Activated CD4-positive, alpha-beta memory T cell treated with anti-CD3 and anti-CD28 coated beads for 36 hours (primary cell): ENCODE measurements at regions of chr10 and their contacts with region 1.

Region 1: GRCh38 chr10:75019370-75019769 is 92.1 kb upstream of the SAMD8 start:
- DNase-seq: no peak
- H3K4me3 Mint-ChIP-seq: no peak overlapping the region
- H3K27ac Mint-ChIP-seq: no peak overlapping the region
- H3K4me1 Mint-ChIP-seq: peaks cover 18% of the 10 kb centered on the region
- H3K27me3 Mint-ChIP-seq: no peaks in the 10 kb centered on the region

Region 2: GRCh38 chr10:74262856-74263255 is 756.5 kb before region 1 on chr10:
- CTCF ChIA-PET with region 1: interaction called, 6 read pairs
- POLR2A ChIA-PET with region 1: no interaction called
- intact Hi-C with region 1: loop called (anchors 1 kb)
- DNase-seq: no peak
- H3K4me3 Mint-ChIP-seq: no peak overlapping the region
- H3K27ac Mint-ChIP-seq: no peak overlapping the region
- H3K4me1 Mint-ChIP-seq: peaks cover 7% of the 10 kb centered on the region
- H3K27me3 Mint-ChIP-seq: no peaks in the 10 kb centered on the region

Region 3: GRCh38 chr10:74332398-74332797 is 687.0 kb before region 1 on chr10:
- CTCF ChIA-PET with region 1: no interaction called
- POLR2A ChIA-PET with region 1: no interaction called
- intact Hi-C with region 1: no loop called
- DNase-seq: no peak
- H3K4me3 Mint-ChIP-seq: no peak overlapping the region
- H3K27ac Mint-ChIP-seq: no peak overlapping the region
- H3K4me1 Mint-ChIP-seq: no peaks in the 10 kb centered on the region
- H3K27me3 Mint-ChIP-seq: no peaks in the 10 kb centered on the region

Region 4: GRCh38 chr10:74419958-74420375 is 599.4 kb before region 1 on chr10:
- CTCF ChIA-PET with region 1: interaction called, 5 read pairs
- POLR2A ChIA-PET with region 1: no interaction called
- intact Hi-C with region 1: loop called (anchors 5 kb)
- DNase-seq: peak; percentile 14
- H3K4me3 Mint-ChIP-seq: no peak overlapping the region
- H3K27ac Mint-ChIP-seq: no peak overlapping the region
- H3K4me1 Mint-ChIP-seq: no peaks in the 10 kb centered on the region
- H3K27me3 Mint-ChIP-seq: no peaks in the 10 kb centered on the region

Region 5: DNA sequence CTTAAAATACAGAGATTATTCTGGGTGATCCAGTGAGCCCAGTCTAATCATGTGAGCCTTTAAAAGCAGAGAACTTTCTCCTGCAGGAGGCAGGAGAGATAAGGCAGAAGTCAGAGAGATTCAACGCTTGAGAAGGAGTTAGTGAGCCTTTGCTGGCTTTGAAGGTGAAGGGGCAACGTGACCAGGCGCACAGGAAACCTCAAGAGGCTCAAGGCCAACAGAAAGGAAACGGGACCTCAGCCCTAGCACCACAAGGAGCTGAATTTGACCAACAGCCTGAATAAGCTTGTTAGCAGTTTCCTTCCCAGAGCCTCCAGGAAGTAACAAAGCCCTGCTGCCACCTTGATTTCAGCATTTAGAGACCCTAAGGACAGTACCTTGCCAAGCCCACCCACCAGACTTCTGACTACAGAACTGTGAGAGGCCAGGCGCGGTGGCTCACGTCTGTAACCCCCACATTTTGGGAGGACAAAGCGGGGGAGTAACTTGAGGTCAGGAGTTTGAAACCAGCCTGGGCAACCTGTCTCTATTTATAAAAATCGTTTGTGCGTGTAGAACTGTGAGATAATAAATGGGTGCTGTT is 280.3 kb before region 1 on chr10:
- CTCF ChIA-PET with region 1: interaction called, 12 read pairs
- POLR2A ChIA-PET with region 1: no interaction called
- intact Hi-C with region 1: loop called (anchors 5 kb)
- DNase-seq: peak; percentile 55
- H3K4me3 Mint-ChIP-seq: no peak overlapping the region
- H3K27ac Mint-ChIP-seq: no peak overlapping the region
- H3K4me1 Mint-ChIP-seq: peaks cover 12% of the 10 kb centered on the region
- H3K27me3 Mint-ChIP-seq: no peaks in the 10 kb centered on the region

Region 6: GRCh38 chr10:74977913-74978847 is 41.2 kb before region 1 on chr10:
- CTCF ChIA-PET with region 1: no interaction called
- POLR2A ChIA-PET with region 1: no interaction called
- intact Hi-C with region 1: loop called (anchors 5 kb)
- DNase-seq: peak; percentile 71
- H3K4me3 Mint-ChIP-seq: no peak overlapping the region
- H3K27ac Mint-ChIP-seq: no peak overlapping the region
- H3K4me1 Mint-ChIP-seq: peaks cover 31% of the 10 kb centered on the region
- H3K27me3 Mint-ChIP-seq: no peaks in the 10 kb centered on the region

Region 7: GRCh38 chr10:75000748-75001321 is 18.5 kb before region 1 on chr10:
- CTCF ChIA-PET with region 1: interaction called, 10 read pairs
- POLR2A ChIA-PET with region 1: no interaction called
- intact Hi-C with region 1: no loop called
- DNase-seq: peak; percentile 46
- H3K4me3 Mint-ChIP-seq: peak overlapping the region; percentile 4
- H3K27ac Mint-ChIP-seq: peak overlapping the region; percentile 63
- H3K4me1 Mint-ChIP-seq: peaks cover 23% of the 10 kb centered on the region
- H3K27me3 Mint-ChIP-seq: no peaks in the 10 kb centered on the region

Region 8: GRCh38 chr10:75099952-75100763 is 80.8 kb after region 1 on chr10:
- CTCF ChIA-PET with region 1: interaction called, 3 read pairs
- POLR2A ChIA-PET with region 1: no interaction called
- intact Hi-C with region 1: loop called (anchors 5 kb)
- DNase-seq: peak; percentile 87
- H3K4me3 Mint-ChIP-seq: no peak overlapping the region
- H3K27ac Mint-ChIP-seq: no peak overlapping the region
- H3K4me1 Mint-ChIP-seq: no peaks in the 10 kb centered on the region
- H3K27me3 Mint-ChIP-seq: no peaks in the 10 kb centered on the region